ENCODE measurements at regions of chr17 and their contacts with region 1.

Region 1: GRCh38 chr17:37609170-37610040 is at the start of gene SYNRG:
- DNase-seq: peak; percentile 97
- ATAC-seq: peak; percentile 87
- H3K4me3 ChIP-seq: peak within 1 kb of the TSS; percentile 80 to 94 (median 89)
- H3K4me3 Mint-ChIP-seq: peak within 1 kb of the TSS; percentile 95
- H3K27ac ChIP-seq: peak within 1 kb of the TSS; percentile 80 to 86
- H3K27ac Mint-ChIP-seq: peak within 1 kb of the TSS; percentile 97
- H3K4me1 ChIP-seq: peaks cover 24 to 37% of the 10 kb centered on the region in 2 donors
- H3K4me1 Mint-ChIP-seq: peaks cover 39% of the 10 kb centered on the region
- H3K27me3 ChIP-seq: no peaks in the 10 kb centered on the region
- H3K27me3 Mint-ChIP-seq: no peaks in the 10 kb centered on the region
- CTCF ChIP-seq: peak; percentile 70
- total RNA-seq, gene SYNRG: 113 and 115 TPM in 2 replicates

Region 2: GRCh38 chr17:37358830-37359681 is 250.3 kb before region 1 on chr17:
- CTCF ChIA-PET with region 1: interaction called, 4 read pairs
- POLR2A ChIA-PET with region 1: interaction called, 5 read pairs
- intact Hi-C with region 1: loop called (anchors 1 kb)
- DNase-seq: peak; percentile 95
- ATAC-seq: peak; percentile 95
- H3K4me3 ChIP-seq: peak overlapping the region; percentile 18 to 88 (median 83)
- H3K4me3 Mint-ChIP-seq: peak overlapping the region; percentile 92
- H3K27ac ChIP-seq: peak overlapping the region; percentile 60 to 63
- H3K27ac Mint-ChIP-seq: peak overlapping the region; percentile 80
- H3K4me1 ChIP-seq: peaks cover 12 to 18% of the 10 kb centered on the region in 2 donors
- H3K4me1 Mint-ChIP-seq: peaks cover 14% of the 10 kb centered on the region
- H3K27me3 ChIP-seq: no peaks in the 10 kb centered on the region
- H3K27me3 Mint-ChIP-seq: no peaks in the 10 kb centered on the region
- CTCF ChIP-seq: peak; percentile 47

Region 3: DNA sequence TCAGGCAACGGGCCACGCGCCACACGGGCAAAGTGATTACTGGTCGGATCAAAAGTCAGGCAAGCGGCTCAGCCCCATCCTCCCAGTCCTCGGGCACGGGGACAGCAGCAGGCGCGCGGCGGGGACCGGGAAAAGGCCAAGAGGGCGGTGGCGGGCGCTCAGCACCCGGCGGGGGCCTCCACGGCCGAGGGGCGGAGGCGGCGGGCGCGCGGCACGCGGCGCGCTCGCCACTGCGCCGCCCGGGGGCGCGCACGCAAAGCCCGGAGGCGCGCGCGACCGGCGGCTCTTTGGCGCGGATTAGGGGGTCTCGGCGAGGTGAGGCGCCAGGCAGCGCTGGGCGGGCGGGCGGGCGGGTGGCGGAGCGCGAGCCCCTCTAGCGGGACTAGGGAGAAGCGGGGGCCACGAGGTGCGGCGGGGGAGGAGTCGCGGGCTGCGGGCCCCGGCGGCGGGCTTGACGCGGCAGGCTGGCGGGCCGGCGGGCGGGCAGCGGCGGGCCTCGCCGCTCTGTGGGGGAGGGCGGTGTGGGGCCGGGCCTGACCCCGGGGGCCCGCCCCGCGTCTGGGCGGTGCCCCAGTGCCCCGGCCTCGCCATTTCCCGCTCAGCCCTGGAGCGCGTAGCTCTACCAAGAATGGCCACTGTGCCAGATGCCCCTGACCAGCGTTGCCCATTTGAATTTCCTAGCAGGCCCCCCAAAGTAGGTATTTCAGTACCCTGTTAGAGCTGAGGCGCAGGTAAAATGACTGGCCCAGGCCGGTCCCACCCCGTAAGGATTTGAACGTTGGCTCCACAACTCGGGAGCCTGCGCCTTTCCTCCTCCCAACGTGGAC is 202.6 kb before region 1 on chr17 and contains the starts of genes ACACA and TADA2A:
- CTCF ChIA-PET with region 1: interaction called, 4 read pairs
- POLR2A ChIA-PET with region 1: interaction called, 3 read pairs
- intact Hi-C with region 1: loop called (anchors 1 kb)
- DNase-seq: peak; percentile 85
- ATAC-seq: peak; percentile 95
- H3K4me3 ChIP-seq: peak within 1 kb of the TSS; percentile 71 to 99 (median 91)
- H3K4me3 Mint-ChIP-seq: peak within 1 kb of the TSS; percentile 99
- H3K27ac ChIP-seq: peak within 1 kb of the TSS; percentile 69 to 72
- H3K27ac Mint-ChIP-seq: peak within 1 kb of the TSS; percentile 97
- H3K4me1 ChIP-seq: peaks cover 4 to 22% of the 10 kb centered on the region in 2 donors
- H3K4me1 Mint-ChIP-seq: peaks cover 36% of the 10 kb centered on the region
- H3K27me3 ChIP-seq: no peaks in the 10 kb centered on the region
- H3K27me3 Mint-ChIP-seq: no peaks in the 10 kb centered on the region
- CTCF ChIP-seq: no peak
- total RNA-seq, gene ACACA: 26.2 and 29.2 TPM in 2 replicates
- total RNA-seq, gene TADA2A: 43.3 and 44.3 TPM in 2 replicates

Region 4: GRCh38 chr17:37489197-37490001 is 120.0 kb before region 1 on chr17 and contains the start of gene DUSP14:
- CTCF ChIA-PET with region 1: no interaction called
- POLR2A ChIA-PET with region 1: no interaction called
- intact Hi-C with region 1: loop called (anchors 1 kb)
- DNase-seq: peak; percentile 89
- ATAC-seq: peak; percentile 80
- H3K4me3 ChIP-seq: peak within 1 kb of the TSS; percentile 61 to 80 (median 73)
- H3K4me3 Mint-ChIP-seq: peak within 1 kb of the TSS; percentile 96
- H3K27ac ChIP-seq: peak within 1 kb of the TSS in 1 of 2 donors; percentile 41
- H3K27ac Mint-ChIP-seq: peak within 1 kb of the TSS; percentile 93
- H3K4me1 ChIP-seq: peaks cover 17 to 23% of the 10 kb centered on the region in 2 donors
- H3K4me1 Mint-ChIP-seq: peaks cover 28% of the 10 kb centered on the region
- H3K27me3 ChIP-seq: peaks cover 0 to 4% (median 0%) of the 10 kb centered on the region in 4 experiments
- H3K27me3 Mint-ChIP-seq: no peaks in the 10 kb centered on the region
- CTCF ChIP-seq: no peak
- total RNA-seq, gene DUSP14: 4.9 and 5.1 TPM in 2 replicates

Region 5: DNA sequence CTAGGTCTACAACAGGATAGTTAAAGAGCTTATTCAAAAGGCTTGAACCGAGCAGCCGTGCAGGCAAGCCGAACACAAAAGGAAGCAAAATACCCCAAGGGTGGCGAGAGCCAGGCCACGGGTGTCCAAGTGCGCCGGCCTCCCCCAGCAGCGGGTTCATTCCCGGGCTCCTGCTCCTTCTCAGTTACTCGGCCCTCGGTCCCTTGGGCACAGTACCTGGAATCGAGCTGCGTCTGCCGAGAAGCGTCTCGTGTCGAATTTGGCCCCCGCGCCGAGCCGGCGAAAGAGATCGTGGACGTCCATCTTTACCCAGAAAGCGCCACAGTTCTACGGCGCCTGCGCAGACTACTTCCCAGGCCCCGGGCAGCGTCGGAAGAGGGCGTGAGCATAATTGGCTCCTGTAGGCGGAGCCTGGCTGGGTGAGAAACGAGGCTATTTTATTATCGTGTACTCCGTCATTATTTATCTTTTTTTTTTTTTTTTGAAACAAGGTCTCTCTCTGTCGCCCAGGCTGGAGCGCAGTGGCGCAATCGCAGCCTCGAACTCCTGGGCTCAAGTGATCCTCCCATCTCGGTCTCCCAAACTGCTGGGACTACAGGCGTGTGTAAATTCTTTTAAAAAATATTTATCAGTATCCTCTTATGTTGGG is 33.8 kb after region 1 on chr17 and contains the start of gene DDX52:
- CTCF ChIA-PET with region 1: interaction called, 5 read pairs
- POLR2A ChIA-PET with region 1: interaction called, 3 read pairs
- intact Hi-C with region 1: loop called (anchors 1 kb)
- DNase-seq: peak; percentile 93
- ATAC-seq: peak; percentile 99
- H3K4me3 ChIP-seq: peak within 1 kb of the TSS; percentile 62 to 97 (median 85)
- H3K4me3 Mint-ChIP-seq: peak within 1 kb of the TSS; percentile 94
- H3K27ac ChIP-seq: peak within 1 kb of the TSS; percentile 64 to 77
- H3K27ac Mint-ChIP-seq: peak within 1 kb of the TSS; percentile 91
- H3K4me1 ChIP-seq: peaks cover 16 to 17% of the 10 kb centered on the region in 2 donors
- H3K4me1 Mint-ChIP-seq: peaks cover 29% of the 10 kb centered on the region
- H3K27me3 ChIP-seq: peaks cover 0 to 30% (median 17%) of the 10 kb centered on the region in 4 experiments
- H3K27me3 Mint-ChIP-seq: peaks cover 29% of the 10 kb centered on the region
- CTCF ChIP-seq: no peak
- total RNA-seq, gene DDX52: 33.0 and 38.2 TPM in 2 replicates

Region 6: DNA sequence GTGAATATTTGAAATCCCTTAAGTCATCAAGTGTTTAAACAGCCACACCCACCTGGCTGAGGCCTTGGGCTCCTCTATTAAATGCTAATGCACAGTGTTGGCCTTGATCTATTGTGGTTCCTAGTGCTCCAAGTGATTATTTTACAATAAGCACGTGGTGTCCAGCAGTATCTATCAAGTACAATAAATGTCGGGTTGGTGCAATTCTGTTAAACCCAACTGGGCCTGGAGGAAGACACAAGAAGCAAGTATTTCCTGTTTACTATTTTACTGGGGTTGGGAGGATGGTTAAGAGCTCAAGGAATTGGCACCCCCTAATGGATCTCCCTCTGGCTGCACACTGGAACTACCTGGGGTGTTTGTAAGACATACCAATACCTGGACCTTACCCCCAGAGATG is 207.5 kb after region 1 on chr17:
- CTCF ChIA-PET with region 1: interaction called, 13 read pairs
- POLR2A ChIA-PET with region 1: no interaction called
- intact Hi-C with region 1: no loop called
- DNase-seq: no peak
- ATAC-seq: no peak
- H3K4me3 ChIP-seq: no peak overlapping the region
- H3K4me3 Mint-ChIP-seq: no peak overlapping the region
- H3K27ac ChIP-seq: no peak overlapping the region
- H3K27ac Mint-ChIP-seq: no peak overlapping the region
- H3K4me1 ChIP-seq: peaks cover 26 to 37% of the 10 kb centered on the region in 2 donors
- H3K4me1 Mint-ChIP-seq: peaks cover 28% of the 10 kb centered on the region
- H3K27me3 ChIP-seq: peaks cover 0 to 11% (median 8%) of the 10 kb centered on the region in 4 experiments
- H3K27me3 Mint-ChIP-seq: peaks cover 21% of the 10 kb centered on the region
- CTCF ChIP-seq: no peak